Left ventricle myocardium superior (tissue), 1 donor: ENCODE measurements at regions of chr6 and their contacts with region 1.

Region 1: GRCh38 chr6:121849477-121849876 is 414.0 kb downstream of the GJA1 start:
- DNase-seq: no peak
- ATAC-seq: peak; percentile 85

Region 2: DNA sequence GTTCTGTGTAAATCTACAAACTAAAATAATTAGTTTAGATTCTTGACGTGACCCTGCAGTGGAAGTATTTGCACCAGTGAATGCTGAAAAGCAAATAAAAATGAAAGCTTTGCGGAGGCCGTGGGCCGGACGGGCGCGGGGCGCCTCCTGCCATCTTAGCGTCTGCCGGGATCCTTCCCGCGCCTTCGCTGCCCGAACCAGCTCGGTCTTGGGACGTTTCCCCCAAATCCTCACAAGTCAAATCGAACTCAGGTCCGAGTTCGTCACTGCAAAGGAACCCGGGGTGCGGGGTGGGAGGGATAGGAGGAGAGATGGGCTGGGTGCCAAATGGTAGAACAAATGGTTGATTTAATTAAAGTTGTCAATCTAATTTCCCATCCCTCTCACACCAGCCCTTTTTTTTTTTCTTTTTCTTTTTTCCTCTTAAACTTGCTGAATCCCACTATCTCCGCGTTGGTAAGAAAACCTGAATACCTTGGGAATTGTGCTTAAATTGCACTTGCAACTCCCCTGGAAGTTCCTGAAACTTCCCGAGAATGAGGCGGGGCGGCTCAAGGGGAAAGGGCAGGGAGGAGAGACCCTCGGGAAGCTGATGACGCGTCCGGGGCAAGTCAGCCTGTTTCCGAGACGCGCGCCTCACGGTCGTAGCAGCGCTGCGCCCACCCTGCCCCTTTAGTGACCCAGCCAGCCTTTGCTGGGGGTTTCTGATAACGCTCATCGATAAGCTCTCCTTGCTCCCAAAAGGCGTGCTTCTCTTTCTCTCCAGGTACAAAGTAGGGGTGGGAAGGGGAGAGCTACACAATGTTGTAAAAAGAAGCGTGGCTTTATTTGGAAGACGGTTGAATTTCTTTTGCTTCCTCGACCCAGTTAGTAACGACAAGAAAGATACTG is 412.3 kb before region 1 on chr6:
- intact Hi-C with region 1: loop called (anchors 5 kb)
- DNase-seq: peak; percentile 55
- ATAC-seq: peak; percentile 42

Region 3: DNA sequence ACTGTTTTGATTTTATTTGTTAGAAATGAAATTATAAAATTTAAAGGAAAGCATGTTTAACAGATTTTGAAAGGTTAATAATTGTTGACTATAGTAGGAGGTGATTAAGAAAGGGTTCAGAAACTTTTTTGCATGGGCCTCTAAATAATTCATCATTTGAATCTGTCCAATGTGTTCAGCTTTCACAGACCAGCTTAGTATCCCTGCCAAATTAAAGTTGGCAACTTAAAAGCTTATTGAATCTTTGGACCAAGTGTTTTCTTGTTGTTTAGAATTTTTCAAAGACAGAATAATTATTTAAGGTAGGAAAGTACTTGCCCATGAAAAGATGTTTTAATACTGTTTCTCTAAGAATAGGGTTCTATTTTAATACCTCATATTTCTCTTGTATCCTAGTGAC is 52.0 kb after region 1 on chr6:
- intact Hi-C with region 1: no loop called
- DNase-seq: no peak
- ATAC-seq: no peak

Region 4: DNA sequence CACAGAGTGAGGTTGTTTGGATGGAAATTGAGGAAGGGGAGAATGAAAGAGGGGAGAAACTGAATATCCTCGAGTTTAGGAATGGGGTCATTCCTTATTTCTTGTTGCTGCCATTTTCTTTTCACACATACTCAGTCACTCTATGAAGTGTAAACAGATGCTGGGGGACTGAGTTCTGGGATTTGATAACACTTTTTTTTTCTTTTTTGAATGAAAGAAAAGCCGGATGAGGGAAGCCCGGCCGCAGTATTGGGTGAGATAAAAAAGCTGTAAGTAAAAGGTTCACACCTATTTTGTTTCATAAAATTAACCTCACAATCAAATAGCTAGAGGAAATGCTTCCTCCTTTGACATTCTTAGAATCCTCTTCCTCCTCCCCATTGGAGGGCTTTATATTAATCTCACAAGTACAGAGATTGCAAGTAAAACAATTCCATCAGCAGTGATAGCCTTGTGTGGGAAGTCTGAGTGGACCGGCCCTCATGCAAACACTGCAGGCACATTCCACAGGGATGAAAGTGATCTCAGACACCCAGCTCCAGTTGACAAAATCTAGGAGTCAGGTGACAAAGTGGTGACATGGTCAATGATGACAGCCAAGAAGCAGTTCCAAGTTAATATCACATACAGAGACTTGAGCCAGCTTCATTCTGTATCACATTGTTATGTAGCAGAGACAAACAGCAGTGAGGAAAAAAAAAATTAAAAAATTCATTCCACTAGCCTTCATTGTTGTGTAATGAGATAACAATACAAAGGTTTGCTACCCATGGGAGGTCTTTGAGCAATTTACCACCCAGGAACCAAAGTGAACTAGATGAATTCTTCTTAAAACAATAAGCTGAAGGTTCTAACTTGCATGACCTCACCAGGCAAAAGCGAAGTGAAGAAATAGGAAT is 158.9 kb after region 1 on chr6:
- intact Hi-C with region 1: loop called (anchors 10 kb)
- DNase-seq: peak; percentile 50
- ATAC-seq: peak; percentile 99

Region 5: GRCh38 chr6:122033539-122034181 is 184.2 kb after region 1 on chr6:
- intact Hi-C with region 1: loop called (anchors 10 kb)
- DNase-seq: no peak
- ATAC-seq: peak; percentile 87